PC-3 (cell line): ENCODE measurements at regions of chr1 and their contacts with region 1.

Region 1: DNA sequence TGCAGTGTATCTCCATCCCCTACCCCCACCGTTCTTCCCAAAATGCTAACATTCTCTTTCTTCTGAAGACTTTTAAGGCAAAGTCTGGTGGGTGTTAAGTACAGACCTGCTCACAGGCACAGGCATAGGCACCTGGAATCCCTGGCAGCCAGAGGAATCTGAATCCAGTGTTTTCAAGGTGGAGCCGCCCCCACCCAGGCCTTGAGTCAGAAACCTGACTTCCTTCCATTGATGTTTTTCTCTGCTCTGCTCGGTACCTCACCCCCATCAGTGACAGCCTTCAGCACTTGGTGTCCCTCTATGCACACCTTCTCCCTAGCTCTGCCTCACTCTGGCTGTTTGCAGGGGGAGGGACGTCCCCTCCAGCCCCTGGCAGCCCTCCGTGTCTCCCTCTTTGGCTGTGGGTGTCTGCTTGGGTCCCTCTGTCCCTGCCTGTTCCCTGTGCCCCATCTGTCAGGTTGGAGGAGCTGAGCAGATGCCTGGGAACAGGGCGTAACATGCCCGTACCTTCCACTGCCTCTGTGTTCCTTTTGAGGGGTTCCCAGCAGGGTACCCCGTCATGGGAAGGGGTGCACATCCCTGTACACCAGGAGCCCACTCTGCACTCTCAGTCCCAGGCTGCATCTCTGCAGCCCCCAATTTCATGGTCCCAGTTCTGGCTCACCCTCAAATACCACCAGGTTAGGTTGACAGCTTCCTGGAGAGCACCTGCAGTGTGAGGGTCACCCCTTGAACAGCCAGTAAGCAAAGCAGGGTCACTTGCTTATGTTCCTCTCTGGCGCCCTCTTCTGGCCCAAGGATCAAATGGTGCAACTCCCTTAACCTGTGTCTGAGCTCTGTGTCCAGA is 6.7 kb downstream of the NCDN start:
- DNase-seq: peak; percentile 81
- ATAC-seq: peak; percentile 62
- H3K4me3 ChIP-seq: no peak overlapping the region
- H3K27ac ChIP-seq: no peak overlapping the region
- H3K4me1 ChIP-seq: peaks cover 7% of the 10 kb centered on the region
- H3K27me3 ChIP-seq: no peaks in the 10 kb centered on the region
- CTCF ChIP-seq: peak; percentile 83

Region 2: DNA sequence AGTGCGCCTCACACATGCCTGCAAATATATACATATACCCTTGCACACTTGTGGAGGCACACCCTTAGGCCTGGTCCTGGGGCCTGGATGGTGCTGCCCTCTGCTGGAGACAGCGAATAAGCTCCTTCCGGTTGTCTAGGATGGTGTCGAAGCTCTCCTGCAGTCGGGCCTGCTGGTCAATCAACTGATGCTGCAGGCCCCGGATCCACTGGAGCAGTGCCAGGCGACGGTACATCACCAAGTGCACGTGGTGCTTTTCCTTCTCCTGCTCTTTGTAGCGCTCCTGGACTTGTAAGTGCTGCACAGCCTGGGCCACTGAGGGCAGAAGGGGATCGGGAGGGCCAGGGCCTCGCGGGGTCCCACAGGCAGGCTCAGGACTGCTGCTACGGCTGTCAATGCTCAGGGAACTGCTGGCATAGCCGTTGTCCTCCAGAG is 151.3 kb after region 1 on chr1:
- CTCF ChIA-PET with region 1: interaction called, 10 read pairs
- POLR2A ChIA-PET with region 1: no interaction called
- intact Hi-C with region 1: loop called (anchors 1 kb)
- DNase-seq: peak; percentile 79
- ATAC-seq: peak; percentile 47
- H3K4me3 ChIP-seq: no peak overlapping the region
- H3K27ac ChIP-seq: no peak overlapping the region
- H3K4me1 ChIP-seq: peaks cover 23% of the 10 kb centered on the region
- H3K27me3 ChIP-seq: no peaks in the 10 kb centered on the region
- CTCF ChIP-seq: peak; percentile 92

Region 3: DNA sequence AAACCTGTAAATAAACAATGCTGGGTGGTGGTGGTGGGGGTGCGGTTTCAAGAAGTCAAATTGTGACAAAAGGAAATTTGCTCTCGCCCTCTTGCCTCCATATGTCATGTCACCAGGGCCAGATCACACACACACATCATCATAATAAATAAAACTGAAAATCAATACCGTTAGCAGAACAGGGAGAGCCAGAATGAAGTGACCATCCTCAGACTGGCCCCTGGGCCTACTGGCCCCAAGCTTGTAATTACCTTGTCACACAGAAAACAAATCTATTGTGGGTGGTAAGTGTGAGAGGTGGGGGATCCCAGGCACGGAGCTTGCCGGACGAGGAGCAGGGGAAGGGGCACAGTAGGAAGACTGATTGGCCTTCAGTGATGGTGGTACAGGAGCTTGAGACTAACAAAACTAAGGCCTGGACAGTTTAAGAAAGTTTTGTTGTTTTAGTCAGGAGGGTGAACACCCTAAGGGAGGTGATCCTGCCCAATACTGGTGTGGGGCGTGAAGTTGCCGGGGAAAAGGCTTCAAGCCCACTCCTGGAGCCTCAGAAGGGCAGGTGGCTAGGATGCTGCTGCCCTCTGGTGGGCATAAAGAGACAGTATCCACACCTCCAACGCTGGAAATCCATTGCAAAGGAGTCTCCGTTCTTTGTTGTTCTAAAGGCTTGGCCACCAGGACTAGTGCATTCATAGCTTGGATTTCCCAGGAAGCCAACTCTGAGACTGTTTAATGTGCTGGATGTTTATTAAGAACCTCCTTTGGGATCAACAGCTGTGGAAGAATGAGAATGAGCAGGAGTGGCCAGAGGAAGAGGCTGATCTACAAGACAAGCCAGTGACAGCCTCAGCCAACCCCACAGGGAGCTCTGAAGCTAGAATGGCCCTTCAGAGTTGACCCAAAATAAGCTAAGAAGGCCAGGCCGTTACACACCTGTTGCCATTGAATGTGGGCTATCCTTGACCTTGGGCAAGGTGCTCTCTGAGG is 162.5 kb after region 1 on chr1:
- CTCF ChIA-PET with region 1: interaction called, 10 read pairs
- POLR2A ChIA-PET with region 1: no interaction called
- intact Hi-C with region 1: loop called (anchors 1 kb)
- DNase-seq: peak; percentile 61
- ATAC-seq: peak; percentile 97
- H3K4me3 ChIP-seq: no peak overlapping the region
- H3K27ac ChIP-seq: no peak overlapping the region
- H3K4me1 ChIP-seq: no peaks in the 10 kb centered on the region
- H3K27me3 ChIP-seq: no peaks in the 10 kb centered on the region
- CTCF ChIP-seq: peak; percentile 90